ENCODE measurements at regions of chr16 and their contacts with region 1.

Region 1: GRCh38 chr16:13919683-13920509 is at the start of gene ERCC4:
- DNase-seq: peak; percentile 100
- H3K4me3 ChIP-seq: peak within 1 kb of the TSS; percentile 96
- CTCF ChIP-seq: peak in 1 of 3 donors; percentile 72
- POLR2A ChIP-seq: no peak
- total RNA-seq, gene ERCC4: 4.0 to 11.6 (median 6.9) TPM

Region 2: GRCh38 chr16:14249291-14250032 is 329.6 kb after region 1 on chr16:
- intact Hi-C with region 1: loop called (anchors 10 kb)
- DNase-seq: peak in 1 of 2 donors; percentile 32
- H3K4me3 ChIP-seq: no peak overlapping the region
- CTCF ChIP-seq: no peak
- POLR2A ChIP-seq: no peak

Region 3: DNA sequence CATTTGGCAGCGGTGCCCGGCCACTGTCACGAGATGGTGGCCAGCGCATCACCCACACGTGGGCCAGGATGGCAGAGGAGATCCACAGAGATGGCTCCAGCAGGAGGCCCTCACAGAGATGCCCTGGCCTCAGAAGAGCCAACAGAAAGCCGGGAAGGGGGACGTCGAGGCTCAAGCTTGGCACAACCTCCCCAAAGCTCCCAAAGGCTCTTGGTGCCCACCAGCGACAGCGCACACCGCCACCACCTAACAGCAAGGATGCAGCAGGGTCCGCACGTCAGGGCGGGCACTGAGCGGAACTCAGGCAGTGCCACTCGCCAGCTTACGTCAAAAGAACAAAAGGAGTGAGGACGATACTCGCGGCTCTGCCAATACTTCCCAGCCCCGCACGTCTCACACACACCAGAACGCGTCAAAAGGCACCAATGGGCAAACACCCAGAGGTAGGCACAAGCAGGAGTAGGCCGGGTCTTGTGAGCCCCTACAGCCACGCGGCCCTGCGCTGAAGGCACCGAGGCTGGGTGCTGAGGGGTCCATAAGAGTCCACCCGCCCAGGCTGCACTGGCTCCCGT is 1226.3 kb after region 1 on chr16:
- intact Hi-C with region 1: no loop called
- DNase-seq: peak in 1 of 2 donors; percentile 77
- H3K4me3 ChIP-seq: no peak overlapping the region
- CTCF ChIP-seq: no peak
- POLR2A ChIP-seq: no peak